ENCODE measurements at regions of chr19 and their contacts with region 1.

Region 1: DNA sequence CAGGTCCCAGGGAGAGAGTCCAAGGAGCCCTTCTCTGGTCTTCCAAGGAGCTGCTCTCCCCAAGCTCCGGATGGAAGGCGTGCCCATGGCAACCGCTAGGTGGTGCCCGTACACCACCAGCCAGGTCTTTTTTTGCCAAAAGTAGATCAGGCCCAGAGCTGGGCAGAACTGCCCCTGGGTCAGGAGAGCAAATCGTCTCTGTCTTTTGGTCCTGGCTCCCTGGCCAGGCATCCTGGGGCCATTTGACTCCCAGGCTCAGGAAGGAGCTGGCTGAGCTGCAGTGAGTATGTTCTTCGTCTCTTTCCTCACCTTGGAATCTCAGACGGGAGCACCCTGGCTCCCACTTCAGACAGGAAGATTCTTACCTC is 24.6 kb upstream of the BCL3 start:
- DNase-seq: peak; percentile 67 to 85 (median 77)
- H3K4me3 ChIP-seq: no peak overlapping the region
- H3K4me3 Mint-ChIP-seq: no peak overlapping the region
- H3K27ac ChIP-seq: no peak overlapping the region
- H3K27ac Mint-ChIP-seq: peak overlapping the region in 5 of 8 donors; percentile 13 to 81 (median 23)
- H3K4me1 ChIP-seq: peaks cover 19% of the 10 kb centered on the region
- H3K4me1 Mint-ChIP-seq: peaks cover 16 to 31% (median 21%) of the 10 kb centered on the region in 3 donors
- H3K27me3 ChIP-seq: no peaks in the 10 kb centered on the region
- H3K27me3 Mint-ChIP-seq: peaks cover 0 to 3% of the 10 kb centered on the region in 2 donors

Region 2: DNA sequence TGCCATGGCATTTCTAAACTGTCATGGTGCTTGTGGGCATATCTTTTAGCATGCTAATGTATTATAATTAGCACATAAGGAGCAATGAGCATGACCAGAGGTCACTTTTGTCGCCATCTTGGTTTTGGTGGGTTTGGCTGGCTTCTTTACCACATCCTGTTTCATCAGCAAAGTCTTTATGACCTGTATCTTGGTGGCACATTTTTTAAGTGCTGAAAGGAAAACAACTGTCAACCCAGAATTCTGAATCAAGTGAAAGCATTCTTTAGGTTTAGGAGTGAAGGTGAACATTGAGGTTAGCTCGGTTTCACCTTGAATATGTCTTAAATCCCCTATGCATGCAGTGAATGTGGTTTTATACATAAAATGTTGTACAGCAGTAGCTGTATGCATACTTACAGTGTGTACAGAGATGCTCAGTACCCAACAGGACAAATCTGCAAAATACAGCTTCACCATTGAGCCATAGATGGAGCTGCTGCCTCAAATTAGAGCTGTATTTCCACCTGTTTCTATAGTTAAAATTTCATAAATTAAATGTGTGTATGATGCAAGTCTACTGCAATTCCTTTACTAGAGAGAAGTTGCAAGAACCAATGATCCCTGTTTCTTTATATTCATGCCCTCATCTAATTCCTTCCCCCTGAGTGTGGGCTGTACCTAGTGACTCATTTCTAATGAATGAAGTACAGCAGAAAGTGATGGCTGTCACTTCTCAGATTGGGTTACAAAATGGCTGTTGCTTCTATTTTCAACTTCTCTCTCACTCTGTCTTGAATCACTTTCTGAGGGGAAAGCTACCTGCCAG is 135.8 kb before region 1 on chr19:
- CTCF ChIA-PET with region 1: no interaction called
- POLR2A ChIA-PET with region 1: no interaction called
- DNase-seq: no peak
- H3K4me3 ChIP-seq: no peak overlapping the region
- H3K4me3 Mint-ChIP-seq: no peak overlapping the region
- H3K27ac ChIP-seq: peak overlapping the region; percentile 33
- H3K27ac Mint-ChIP-seq: no peak overlapping the region
- H3K4me1 ChIP-seq: no peaks in the 10 kb centered on the region
- H3K4me1 Mint-ChIP-seq: no peaks in the 10 kb centered on the region
- H3K27me3 ChIP-seq: no peaks in the 10 kb centered on the region
- H3K27me3 Mint-ChIP-seq: peaks cover 10 to 22% of the 10 kb centered on the region in 2 donors

Region 3: DNA sequence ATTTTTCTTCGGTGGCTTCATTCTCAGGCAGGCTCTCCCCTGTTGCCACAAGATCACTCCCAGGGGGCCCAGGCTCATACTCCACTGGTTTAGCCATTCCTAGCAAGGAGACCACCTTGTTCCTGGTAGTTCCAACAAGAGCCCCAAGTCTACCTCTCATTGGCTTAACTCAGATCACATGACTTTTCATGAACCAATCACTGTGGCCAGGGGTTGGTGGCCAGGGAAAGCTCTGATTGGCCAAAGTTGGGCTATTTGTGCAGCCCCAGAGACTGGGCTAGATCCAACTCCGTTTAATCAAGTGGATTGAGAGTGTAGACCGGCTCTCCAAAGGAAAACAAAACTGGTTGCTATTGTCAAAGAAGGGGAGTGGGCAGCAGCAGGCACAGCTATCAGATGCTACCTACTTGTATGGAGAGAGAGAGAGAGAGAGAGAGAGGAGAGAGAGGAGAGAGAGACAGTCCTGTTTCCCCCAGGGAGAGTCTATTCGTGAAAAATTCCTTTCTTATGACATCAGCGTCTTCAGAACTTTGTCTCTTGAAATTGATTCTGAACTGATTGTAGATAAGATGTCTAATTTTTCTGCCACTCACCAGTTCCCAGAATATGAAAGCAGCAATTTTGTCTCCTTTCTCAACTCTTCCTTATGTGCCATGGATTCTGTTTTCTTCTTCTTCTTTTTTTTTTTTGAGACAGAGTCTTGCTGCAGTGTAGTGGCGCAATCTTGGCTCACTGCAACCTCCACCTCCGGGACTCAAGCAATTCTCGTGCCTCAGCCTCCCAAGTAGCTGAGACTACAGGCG is 46.7 kb before region 1 on chr19:
- CTCF ChIA-PET with region 1: no interaction called
- POLR2A ChIA-PET with region 1: no interaction called
- DNase-seq: no peak
- H3K4me3 ChIP-seq: no peak overlapping the region
- H3K4me3 Mint-ChIP-seq: no peak overlapping the region
- H3K27ac ChIP-seq: no peak overlapping the region
- H3K27ac Mint-ChIP-seq: no peak overlapping the region
- H3K4me1 ChIP-seq: no peaks in the 10 kb centered on the region
- H3K4me1 Mint-ChIP-seq: no peaks in the 10 kb centered on the region
- H3K27me3 ChIP-seq: no peaks in the 10 kb centered on the region
- H3K27me3 Mint-ChIP-seq: peaks cover 5 to 15% of the 10 kb centered on the region in 2 donors

Region 4: DNA sequence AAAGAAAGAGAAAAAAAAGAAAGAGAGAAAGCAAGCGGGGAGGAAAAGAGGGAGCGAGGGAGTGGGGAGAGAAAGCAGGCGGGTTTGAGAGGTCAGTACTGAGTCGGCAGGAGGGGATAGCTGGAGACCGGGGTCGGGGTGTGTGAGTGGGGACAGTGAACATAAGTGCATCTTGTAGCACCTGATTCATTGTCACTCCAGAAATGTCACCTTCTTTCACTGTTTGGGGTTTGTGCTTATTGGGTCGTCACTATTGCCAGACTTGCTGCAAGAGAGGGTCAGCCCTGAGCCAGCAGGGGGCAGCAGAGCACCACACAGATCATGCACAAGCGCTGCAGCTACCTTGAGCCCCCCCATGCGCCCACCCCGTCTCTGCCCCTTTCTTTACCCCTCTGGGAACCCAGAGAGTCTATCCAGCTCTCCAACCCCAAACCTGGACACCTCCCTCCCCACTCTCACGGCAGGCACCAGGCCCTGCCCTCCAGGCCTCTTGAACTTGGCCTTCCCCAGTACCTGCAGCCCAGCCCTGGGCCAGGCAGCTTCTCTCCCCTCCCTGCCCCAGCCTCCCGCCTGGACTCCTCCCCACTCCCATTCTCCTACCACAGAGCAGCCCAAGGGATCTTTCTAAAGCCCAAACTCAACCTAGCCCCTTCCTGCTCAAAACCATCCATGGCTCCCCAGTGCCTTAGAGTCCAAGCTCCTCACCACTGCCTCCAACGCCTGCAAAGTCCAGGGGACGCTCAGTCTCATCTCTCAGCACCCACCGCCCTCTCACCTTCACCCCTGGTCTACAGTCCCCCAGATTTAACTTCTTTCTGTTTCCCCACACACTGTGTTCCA is 34.7 kb before region 1 on chr19:
- CTCF ChIA-PET with region 1: interaction called, 32 read pairs
- POLR2A ChIA-PET with region 1: no interaction called
- DNase-seq: peak; percentile 47 to 81 (median 68)
- H3K4me3 ChIP-seq: no peak overlapping the region
- H3K4me3 Mint-ChIP-seq: no peak overlapping the region
- H3K27ac ChIP-seq: no peak overlapping the region
- H3K27ac Mint-ChIP-seq: peak overlapping the region in 4 of 8 donors; percentile 21 to 70 (median 52)
- H3K4me1 ChIP-seq: peaks cover 22% of the 10 kb centered on the region
- H3K4me1 Mint-ChIP-seq: peaks cover 19 to 29% (median 23%) of the 10 kb centered on the region in 3 donors
- H3K27me3 ChIP-seq: no peaks in the 10 kb centered on the region
- H3K27me3 Mint-ChIP-seq: peaks cover 2 to 17% of the 10 kb centered on the region in 2 donors

Region 5: GRCh38 chr19:44752816-44753618 is 29.1 kb after region 1 on chr19:
- CTCF ChIA-PET with region 1: interaction called, 26 read pairs
- POLR2A ChIA-PET with region 1: interaction called, 4 read pairs
- DNase-seq: peak; percentile 93 to 97 (median 96)
- H3K4me3 ChIP-seq: peak overlapping the region; percentile 43
- H3K4me3 Mint-ChIP-seq: peak overlapping the region; percentile 89 to 98 (median 94)
- H3K27ac ChIP-seq: peak overlapping the region; percentile 18
- H3K27ac Mint-ChIP-seq: peak overlapping the region; percentile 96 to 99 (median 98)
- H3K4me1 ChIP-seq: peaks cover 59% of the 10 kb centered on the region
- H3K4me1 Mint-ChIP-seq: peaks cover 55 to 74% (median 67%) of the 10 kb centered on the region in 3 donors
- H3K27me3 ChIP-seq: no peaks in the 10 kb centered on the region
- H3K27me3 Mint-ChIP-seq: peaks cover 0 to 3% of the 10 kb centered on the region in 2 donors

Measured in CD8-positive, alpha-beta memory T cell (primary cell).